H1 (cell line): ENCODE measurements at regions of chr9 and their contacts with region 1.

Region 1: GRCh38 chr9:22718653-22719052 is 272.0 kb downstream of the DMRTA1 start:
- DNase-seq: no peak
- H3K4me3 ChIP-seq: no peak overlapping the region
- H3K27ac ChIP-seq: no peak overlapping the region
- H3K4me1 ChIP-seq: no peaks in the 10 kb centered on the region
- H3K27me3 ChIP-seq: no peaks in the 10 kb centered on the region
- CTCF ChIP-seq: no peak
- EP300 ChIP-seq: no peak
- POLR2A ChIP-seq: no peak
- RAD21 ChIP-seq: no peak

Region 2: GRCh38 chr9:22512495-22512894 is 206.2 kb before region 1 on chr9:
- CTCF ChIA-PET with region 1: no interaction called
- POLR2A ChIA-PET with region 1: no interaction called
- DNase-seq: no peak
- H3K4me3 ChIP-seq: no peak overlapping the region
- H3K27ac ChIP-seq: no peak overlapping the region
- H3K4me1 ChIP-seq: no peaks in the 10 kb centered on the region
- H3K27me3 ChIP-seq: no peaks in the 10 kb centered on the region
- CTCF ChIP-seq: no peak
- EP300 ChIP-seq: no peak
- POLR2A ChIP-seq: no peak
- RAD21 ChIP-seq: no peak

Region 3: GRCh38 chr9:22649384-22649783 is 69.3 kb before region 1 on chr9:
- CTCF ChIA-PET with region 1: interaction called, 12 read pairs
- POLR2A ChIA-PET with region 1: no interaction called
- DNase-seq: no peak
- H3K4me3 ChIP-seq: no peak overlapping the region
- H3K27ac ChIP-seq: no peak overlapping the region
- H3K4me1 ChIP-seq: no peaks in the 10 kb centered on the region
- H3K27me3 ChIP-seq: no peaks in the 10 kb centered on the region
- CTCF ChIP-seq: no peak
- EP300 ChIP-seq: no peak
- POLR2A ChIP-seq: no peak
- RAD21 ChIP-seq: no peak